Astrocyte of the cerebellum (primary cell): ENCODE measurements at regions of chr2 and their contacts with region 1.

Region 1: GRCh38 chr2:224260372-224261020 is 141.4 kb downstream of the FAM124B start:
- DNase-seq: no peak
- H3K4me3 ChIP-seq: no peak overlapping the region
- CTCF ChIP-seq: no peak

Region 2: DNA sequence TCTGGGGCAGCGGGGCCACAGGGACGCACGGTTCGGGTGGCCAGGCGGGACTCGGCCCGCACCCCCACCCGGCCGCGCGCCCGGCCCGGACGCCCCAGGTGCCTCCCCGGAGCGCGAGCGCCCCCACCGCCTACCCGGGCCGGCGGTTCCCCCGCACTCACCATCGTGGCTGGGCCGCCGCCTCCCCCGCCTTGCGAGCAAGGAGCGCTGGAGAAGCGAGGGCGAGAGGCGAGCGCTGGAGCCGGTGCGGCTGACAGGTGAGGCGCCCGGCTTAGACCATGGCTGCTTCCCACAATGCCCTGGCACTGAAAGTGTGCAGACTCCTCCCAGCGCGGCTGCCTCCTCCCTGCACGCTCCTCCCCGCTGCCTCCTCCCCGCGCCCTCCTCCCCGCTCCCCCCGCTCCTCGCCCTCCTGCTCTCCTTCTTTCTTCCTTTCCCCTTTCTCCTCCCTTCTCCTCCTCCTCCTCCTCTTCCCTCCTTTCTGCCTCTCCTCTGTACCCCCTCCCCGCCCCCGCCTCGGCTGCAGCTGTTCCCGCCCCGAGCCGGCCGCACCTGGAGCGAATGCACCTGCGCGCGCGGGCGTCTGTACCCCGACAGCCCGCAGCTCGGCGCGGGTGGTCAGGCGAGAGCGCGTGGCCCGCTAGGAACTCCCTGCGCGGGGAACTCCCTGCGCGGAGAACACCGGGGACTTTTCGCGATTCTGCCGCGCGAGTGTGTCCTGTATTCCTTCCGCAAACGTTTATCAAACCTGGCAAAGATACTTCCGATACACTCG is 423.0 kb before region 1 on chr2 and contains the start of gene AP1S3:
- in situ Hi-C with region 1: no loop called
- DNase-seq: no peak
- H3K4me3 ChIP-seq: peak within 1 kb of the TSS; percentile 61
- CTCF ChIP-seq: no peak

Region 3: GRCh38 chr2:224217962-224218347 is 42.5 kb before region 1 on chr2:
- in situ Hi-C with region 1: loop called (anchors 5 kb)
- DNase-seq: peak; percentile 90
- H3K4me3 ChIP-seq: no peak overlapping the region
- CTCF ChIP-seq: no peak

Region 4: DNA sequence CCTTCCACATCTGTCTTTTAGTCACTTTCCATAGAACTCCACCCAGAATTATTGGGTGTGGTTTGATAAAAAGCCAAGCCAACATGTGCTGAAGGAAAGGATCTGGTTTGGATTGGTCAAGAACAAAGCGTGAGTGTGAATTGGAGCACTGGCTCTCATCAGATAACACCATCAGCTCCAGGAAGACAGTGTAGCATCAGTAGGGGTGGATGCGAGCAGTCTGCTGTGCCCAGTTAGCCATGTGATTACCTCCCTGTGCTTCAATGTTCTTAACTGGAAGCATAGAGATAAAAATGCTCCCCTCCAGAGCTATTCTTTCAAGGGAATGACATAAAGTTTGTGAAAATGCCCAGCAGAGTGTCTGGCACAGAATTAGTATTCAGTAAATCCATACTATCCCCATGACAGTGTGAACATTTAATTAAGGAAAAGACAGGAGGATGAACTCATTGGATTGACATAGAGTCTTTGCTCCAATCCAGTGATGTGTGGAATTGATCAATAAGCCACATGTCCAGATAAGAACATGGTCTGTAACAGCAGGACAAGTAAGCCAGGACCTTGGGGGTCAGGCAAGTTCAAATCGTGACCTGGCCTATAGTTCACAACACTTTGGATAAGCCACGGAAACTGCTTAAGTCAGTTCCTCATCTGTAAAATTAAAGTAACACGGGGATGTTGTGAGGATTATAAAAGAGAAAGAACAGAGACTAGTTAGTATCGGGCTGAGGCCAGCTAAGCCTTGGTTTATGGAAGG is 73.4 kb after region 1 on chr2:
- in situ Hi-C with region 1: no loop called
- DNase-seq: no peak
- H3K4me3 ChIP-seq: no peak overlapping the region
- CTCF ChIP-seq: no peak

Region 5: GRCh38 chr2:224545884-224546644 is 285.6 kb after region 1 on chr2:
- in situ Hi-C with region 1: no loop called
- DNase-seq: peak; percentile 11
- H3K4me3 ChIP-seq: no peak overlapping the region
- CTCF ChIP-seq: no peak